ENCODE measurements at regions of chr11 and their contacts with region 1.

Region 1: DNA sequence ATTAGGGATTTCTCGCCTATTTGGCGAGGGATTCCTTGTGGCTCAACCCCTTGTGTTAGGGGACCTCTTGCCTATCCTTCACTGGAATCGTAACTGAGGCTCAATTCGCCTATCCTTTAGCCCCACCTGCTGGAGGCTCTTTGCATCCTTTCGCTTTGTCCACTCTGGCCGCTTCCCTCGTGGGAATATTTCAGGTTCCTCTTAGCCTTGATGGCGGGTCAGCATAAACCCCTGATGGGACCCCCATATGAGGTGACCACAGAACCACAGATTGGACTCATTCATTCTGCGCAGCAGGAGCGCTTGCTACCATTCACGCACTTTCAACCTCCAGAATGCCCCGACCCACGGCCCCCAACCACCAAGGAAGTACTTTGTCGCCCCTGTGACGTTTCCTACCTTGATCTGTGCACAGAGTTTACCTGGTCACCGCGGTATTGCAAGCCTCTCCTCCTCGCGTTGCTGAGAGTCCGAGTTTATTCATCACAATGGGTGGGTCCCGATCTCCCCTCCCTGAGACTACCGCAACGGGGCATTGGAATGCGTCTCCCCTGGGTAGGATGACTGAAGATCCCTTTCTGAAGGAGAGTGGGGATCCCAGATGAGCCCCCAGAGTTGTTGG is at the start of gene OR52N2:
- DNase-seq: peak; percentile 79
- H3K4me3 Mint-ChIP-seq: peak within 1 kb of the TSS; percentile 81
- H3K27ac Mint-ChIP-seq: peak within 1 kb of the TSS; percentile 38
- H3K4me1 Mint-ChIP-seq: peaks cover 12% of the 10 kb centered on the region
- H3K27me3 Mint-ChIP-seq: peaks cover 48% of the 10 kb centered on the region
- CTCF ChIP-seq: peak; percentile 82
- total RNA-seq, gene OR52N2: not detected in 2 replicates

Region 2: DNA sequence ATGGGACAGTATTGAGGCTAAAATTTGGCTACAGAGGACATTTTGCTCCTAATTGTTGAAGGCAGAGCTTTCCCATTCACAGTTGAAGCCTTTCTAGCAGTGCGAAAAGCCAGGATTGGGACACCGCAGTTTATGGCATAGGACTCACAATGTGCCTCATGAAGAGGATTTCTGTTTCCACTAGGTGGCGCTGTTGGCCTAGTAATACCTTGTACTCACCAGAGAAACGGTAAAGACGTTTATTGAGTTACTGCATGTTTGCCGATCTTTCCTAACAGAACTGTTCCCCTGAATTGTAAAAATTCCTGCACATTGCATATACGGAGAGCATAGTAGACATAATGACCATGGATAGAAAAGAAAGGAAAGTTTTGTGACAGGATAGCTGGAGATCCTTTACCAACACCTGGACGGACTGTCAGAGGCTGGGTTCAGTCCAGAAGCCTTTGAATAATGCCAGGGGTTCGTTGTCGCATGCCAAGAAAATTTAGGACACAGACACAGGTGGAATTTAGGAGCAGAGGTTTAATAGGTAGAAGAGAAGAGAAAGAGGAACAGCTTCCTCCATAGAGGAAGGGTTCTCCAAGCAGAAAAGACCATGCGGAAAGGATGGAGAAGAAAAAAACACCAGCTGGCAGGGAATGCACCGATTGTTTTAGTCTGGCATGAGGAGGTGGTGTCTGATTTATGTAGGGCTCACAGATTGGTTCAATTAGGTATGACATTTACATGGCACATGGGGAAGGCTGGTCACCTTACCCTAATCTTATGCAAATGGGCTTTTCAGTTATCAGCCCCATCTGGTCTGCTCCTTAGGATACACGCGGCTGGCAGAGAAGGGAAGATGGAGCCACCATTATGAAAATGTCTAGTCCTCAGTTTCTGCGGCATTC is 1182.2 kb before region 1 on chr11:
- CTCF ChIA-PET with region 1: no interaction called
- intact Hi-C with region 1: loop called (anchors 5 kb)
- DNase-seq: peak; percentile 77
- H3K4me3 Mint-ChIP-seq: no peak overlapping the region
- H3K27ac Mint-ChIP-seq: no peak overlapping the region
- H3K4me1 Mint-ChIP-seq: peaks cover 8% of the 10 kb centered on the region
- H3K27me3 Mint-ChIP-seq: peaks cover 64% of the 10 kb centered on the region
- CTCF ChIP-seq: peak; percentile 73

Region 3: DNA sequence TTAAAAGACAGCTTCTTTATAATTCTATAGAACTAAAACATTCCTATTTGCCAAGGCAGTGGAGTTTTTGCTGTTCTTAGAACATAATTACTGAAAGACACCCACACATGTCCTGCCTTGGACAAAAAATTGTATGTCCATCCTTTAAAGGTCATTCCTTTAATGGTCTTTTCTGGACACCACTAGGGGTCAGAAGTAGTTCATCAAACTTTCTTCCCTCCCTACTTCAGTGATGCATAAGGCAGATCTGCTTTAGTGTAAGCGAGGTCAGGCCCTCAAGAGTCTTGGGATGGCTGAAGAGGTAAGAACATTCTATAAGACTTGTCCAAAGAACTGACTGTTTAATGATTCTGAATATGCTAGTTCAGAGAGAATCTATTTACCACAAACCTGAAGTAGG is 603.8 kb before region 1 on chr11:
- CTCF ChIA-PET with region 1: no interaction called
- intact Hi-C with region 1: loop called (anchors 1 kb)
- DNase-seq: peak; percentile 22
- H3K4me3 Mint-ChIP-seq: no peak overlapping the region
- H3K27ac Mint-ChIP-seq: no peak overlapping the region
- H3K4me1 Mint-ChIP-seq: no peaks in the 10 kb centered on the region
- H3K27me3 Mint-ChIP-seq: no peaks in the 10 kb centered on the region
- CTCF ChIP-seq: peak; percentile 53

Region 4: GRCh38 chr11:5476184-5476819 is 332.3 kb before region 1 on chr11:
- CTCF ChIA-PET with region 1: no interaction called
- intact Hi-C with region 1: loop called (anchors 1 kb)
- DNase-seq: peak; percentile 54
- H3K4me3 Mint-ChIP-seq: no peak overlapping the region
- H3K27ac Mint-ChIP-seq: no peak overlapping the region
- H3K4me1 Mint-ChIP-seq: no peaks in the 10 kb centered on the region
- H3K27me3 Mint-ChIP-seq: peaks cover 21% of the 10 kb centered on the region
- CTCF ChIP-seq: peak; percentile 41

Region 5: GRCh38 chr11:5564259-5565019 is 244.2 kb before region 1 on chr11:
- CTCF ChIA-PET with region 1: no interaction called
- intact Hi-C with region 1: no loop called
- DNase-seq: no peak
- H3K4me3 Mint-ChIP-seq: no peak overlapping the region
- H3K27ac Mint-ChIP-seq: no peak overlapping the region
- H3K4me1 Mint-ChIP-seq: no peaks in the 10 kb centered on the region
- H3K27me3 Mint-ChIP-seq: no peaks in the 10 kb centered on the region
- CTCF ChIP-seq: no peak

Region 6: GRCh38 chr11:5712507-5712906 is 96.1 kb before region 1 on chr11:
- CTCF ChIA-PET with region 1: no interaction called
- intact Hi-C with region 1: loop called (anchors 1 kb)
- DNase-seq: no peak
- H3K4me3 Mint-ChIP-seq: no peak overlapping the region
- H3K27ac Mint-ChIP-seq: no peak overlapping the region
- H3K4me1 Mint-ChIP-seq: no peaks in the 10 kb centered on the region
- H3K27me3 Mint-ChIP-seq: peaks cover 31% of the 10 kb centered on the region
- CTCF ChIP-seq: no peak

Region 7: DNA sequence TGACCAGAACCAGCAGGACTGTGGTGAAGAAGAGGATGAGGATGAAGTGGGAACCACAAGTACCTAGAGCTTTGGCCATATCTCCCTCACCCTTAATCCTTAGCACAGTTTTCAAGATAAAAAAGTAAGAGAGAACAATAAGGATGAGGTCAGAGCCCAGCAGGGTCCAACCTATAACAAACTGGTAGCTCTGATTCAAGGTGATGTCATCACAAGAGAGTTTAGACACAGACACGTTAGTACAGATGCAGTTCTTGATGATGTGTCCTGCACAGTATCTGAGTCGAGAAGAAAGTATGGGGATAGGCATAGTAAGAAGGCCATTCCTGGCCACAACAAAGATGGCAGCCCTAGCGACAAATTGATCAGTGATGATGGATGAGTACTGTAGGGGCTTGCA is 159.1 kb after region 1 on chr11:
- CTCF ChIA-PET with region 1: no interaction called
- intact Hi-C with region 1: no loop called
- DNase-seq: no peak
- H3K4me3 Mint-ChIP-seq: no peak overlapping the region
- H3K27ac Mint-ChIP-seq: no peak overlapping the region
- H3K4me1 Mint-ChIP-seq: no peaks in the 10 kb centered on the region
- H3K27me3 Mint-ChIP-seq: peaks cover 12% of the 10 kb centered on the region
- CTCF ChIP-seq: no peak

Region 8: GRCh38 chr11:6612213-6613041 is 803.8 kb after region 1 on chr11 and contains the start of gene TAF10:
- CTCF ChIA-PET with region 1: no interaction called
- intact Hi-C with region 1: no loop called
- DNase-seq: peak; percentile 97
- H3K4me3 Mint-ChIP-seq: no peak within 1 kb of the TSS
- H3K27ac Mint-ChIP-seq: peak within 1 kb of the TSS; percentile 81
- H3K4me1 Mint-ChIP-seq: peaks cover 21% of the 10 kb centered on the region
- H3K27me3 Mint-ChIP-seq: no peaks in the 10 kb centered on the region
- CTCF ChIP-seq: peak; percentile 26
- total RNA-seq, gene TAF10: 175 and 187 TPM in 2 replicates